ENCODE measurements at regions of chr3 and their contacts with region 1.

Region 1: DNA sequence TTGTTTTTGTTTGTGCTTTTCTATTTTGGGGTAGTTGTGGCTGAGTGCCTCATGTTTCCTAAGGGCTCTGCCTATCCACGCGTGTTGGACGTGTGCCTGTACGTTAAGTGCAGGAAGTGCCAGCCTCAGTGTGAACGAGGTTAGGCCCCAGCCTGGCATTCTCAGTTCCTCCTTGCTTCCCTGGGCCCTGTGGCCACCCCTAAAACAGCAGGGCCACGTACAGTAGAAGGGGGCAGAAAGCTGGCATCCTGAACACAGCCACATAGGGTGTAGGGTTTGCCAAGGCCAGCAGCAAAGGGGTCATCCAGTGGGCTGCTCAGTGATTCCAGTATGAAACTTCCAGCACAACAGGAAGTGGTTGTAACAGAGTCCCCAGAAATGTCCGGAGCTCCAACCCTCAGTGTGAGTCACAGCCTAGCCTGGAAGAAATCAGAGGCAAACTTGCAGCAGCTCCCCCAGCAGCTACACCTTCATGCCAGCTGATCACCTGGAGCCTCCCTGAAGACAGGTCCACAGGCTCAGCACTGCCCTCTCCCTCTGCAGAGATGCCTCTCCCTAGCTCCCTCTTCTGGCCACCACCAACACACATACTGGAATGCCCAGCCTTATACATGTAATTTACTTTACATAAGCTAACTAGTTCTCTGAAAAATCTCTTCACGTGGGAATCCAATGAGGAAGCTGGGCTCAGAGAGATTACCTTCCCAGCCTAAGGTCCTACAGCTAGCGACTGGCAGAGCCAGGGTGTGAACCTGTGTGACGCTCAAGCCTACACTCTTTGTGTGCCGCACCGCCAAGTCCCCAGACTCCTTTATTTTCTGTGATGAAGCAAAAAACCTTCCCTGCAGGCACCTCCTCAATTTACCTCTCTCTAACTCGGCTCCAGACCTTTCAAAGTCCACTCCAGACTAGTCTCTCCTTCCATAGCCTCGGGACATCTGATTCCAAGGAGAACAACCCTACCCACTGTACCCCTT is 26.6 kb downstream of the ILDR1 start:
- DNase-seq: peak; percentile 52
- ATAC-seq: peak; percentile 99
- H3K4me3 ChIP-seq: no peak overlapping the region
- H3K27ac ChIP-seq: no peak overlapping the region
- H3K4me1 ChIP-seq: no peaks in the 10 kb centered on the region
- H3K27me3 ChIP-seq: no peaks in the 10 kb centered on the region
- CTCF ChIP-seq: peak; percentile 80
- EP300 ChIP-seq: no peak
- POLR2A ChIP-seq: no peak
- RAD21 ChIP-seq: peak; percentile 66

Region 2: DNA sequence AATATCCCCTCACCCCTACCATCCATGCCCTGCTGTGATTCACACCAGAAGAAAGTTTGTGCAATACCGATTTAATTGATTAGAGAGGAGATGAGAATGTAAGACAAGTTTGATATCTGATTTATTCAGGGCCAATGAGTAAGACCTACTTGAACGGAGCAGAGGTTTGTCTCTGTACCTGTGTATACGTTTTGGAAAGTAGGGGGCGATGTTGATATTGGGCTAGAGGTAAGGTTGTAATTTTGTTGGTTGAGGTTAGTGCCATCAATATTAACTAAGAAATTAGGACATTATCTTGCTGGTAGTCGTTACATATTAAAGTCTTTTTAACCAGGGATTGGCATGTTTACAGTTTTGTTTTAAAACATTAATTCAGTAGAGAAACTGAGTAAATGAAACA is 139.9 kb before region 1 on chr3:
- CTCF ChIA-PET with region 1: interaction called, 4 read pairs
- POLR2A ChIA-PET with region 1: no interaction called
- in situ Hi-C with region 1: no loop called
- intact Hi-C with region 1: loop called (anchors 1 kb)
- DNase-seq: peak; percentile 15
- ATAC-seq: 0 out of 3 replicates have a peak, but pooled peaks have one; percentile 34
- H3K4me3 ChIP-seq: no peak overlapping the region
- H3K27ac ChIP-seq: no peak overlapping the region
- H3K4me1 ChIP-seq: no peaks in the 10 kb centered on the region
- H3K27me3 ChIP-seq: no peaks in the 10 kb centered on the region
- CTCF ChIP-seq: peak; percentile 57
- EP300 ChIP-seq: no peak
- POLR2A ChIP-seq: no peak
- RAD21 ChIP-seq: no peak

Region 3: GRCh38 chr3:122101646-122102045 is 106.2 kb after region 1 on chr3:
- CTCF ChIA-PET with region 1: no interaction called
- POLR2A ChIA-PET with region 1: no interaction called
- in situ Hi-C with region 1: no loop called
- intact Hi-C with region 1: no loop called
- DNase-seq: peak; percentile 56
- ATAC-seq: peak; percentile 73
- H3K4me3 ChIP-seq: no peak overlapping the region
- H3K27ac ChIP-seq: no peak overlapping the region
- H3K4me1 ChIP-seq: no peaks in the 10 kb centered on the region
- H3K27me3 ChIP-seq: no peaks in the 10 kb centered on the region
- CTCF ChIP-seq: peak; percentile 67
- EP300 ChIP-seq: no peak
- POLR2A ChIP-seq: no peak
- RAD21 ChIP-seq: peak; percentile 39; the same call in 1 of the 2 replicates

Region 4: DNA sequence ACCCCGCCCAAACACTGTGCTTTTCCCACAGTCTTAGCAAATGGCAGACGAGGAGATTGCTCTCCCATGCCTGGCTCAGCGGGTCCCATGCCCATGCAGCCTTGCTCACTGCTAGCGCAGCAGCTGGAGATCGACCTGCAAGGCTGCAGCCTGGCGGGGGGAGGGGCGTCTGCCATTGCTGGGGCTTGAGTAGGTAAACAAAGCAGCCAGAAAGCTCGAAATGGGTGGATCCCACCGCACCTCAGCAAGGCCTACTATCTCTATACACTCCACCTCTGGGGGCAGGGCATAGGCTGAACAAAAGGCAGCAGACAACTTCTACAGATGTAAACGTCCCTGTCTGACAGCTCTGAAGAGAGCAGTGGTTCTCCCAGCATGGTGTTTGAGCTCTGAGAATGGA is 447.6 kb after region 1 on chr3:
- CTCF ChIA-PET with region 1: no interaction called
- POLR2A ChIA-PET with region 1: no interaction called
- in situ Hi-C with region 1: no loop called
- intact Hi-C with region 1: no loop called
- DNase-seq: peak; percentile 9
- ATAC-seq: no peak
- H3K4me3 ChIP-seq: no peak overlapping the region
- H3K27ac ChIP-seq: no peak overlapping the region
- H3K4me1 ChIP-seq: no peaks in the 10 kb centered on the region
- H3K27me3 ChIP-seq: no peaks in the 10 kb centered on the region
- CTCF ChIP-seq: no peak
- EP300 ChIP-seq: no peak
- POLR2A ChIP-seq: no peak
- RAD21 ChIP-seq: no peak